ENCODE measurements at regions of chr13 and their contacts with region 1.

Region 1: GRCh38 chr13:44050450-44051063 is 170.9 kb downstream of the LACC1 start:
- DNase-seq: peak; percentile 52
- ATAC-seq: no peak; the same call in 1 of the 2 replicates
- H3K4me3 ChIP-seq: no peak overlapping the region
- H3K27ac ChIP-seq: no peak overlapping the region
- H3K4me1 ChIP-seq: peaks cover 13% of the 10 kb centered on the region
- H3K27me3 ChIP-seq: peaks cover 5% of the 10 kb centered on the region
- CTCF ChIP-seq: peak; percentile 75
- POLR2A ChIP-seq: no peak
- RAD21 ChIP-seq: peak; percentile 78

Region 2: GRCh38 chr13:44128552-44129001 is 78.0 kb after region 1 on chr13:
- CTCF ChIA-PET with region 1: no interaction called
- POLR2A ChIA-PET with region 1: no interaction called
- dilution Hi-C with region 1: no loop called
- in situ Hi-C with region 1: no loop called
- intact Hi-C with region 1: loop called (anchors 5 kb)
- DNase-seq: peak; percentile 65
- ATAC-seq: peak; percentile 57
- H3K4me3 ChIP-seq: no peak overlapping the region
- H3K27ac ChIP-seq: no peak overlapping the region
- H3K4me1 ChIP-seq: peaks cover 19% of the 10 kb centered on the region
- H3K27me3 ChIP-seq: no peaks in the 10 kb centered on the region
- CTCF ChIP-seq: no peak
- POLR2A ChIP-seq: no peak
- RAD21 ChIP-seq: no peak; the same call in 1 of the 2 replicates

Region 3: GRCh38 chr13:44237276-44237767 is 186.8 kb after region 1 on chr13:
- CTCF ChIA-PET with region 1: no interaction called
- POLR2A ChIA-PET with region 1: no interaction called
- dilution Hi-C with region 1: no loop called
- in situ Hi-C with region 1: no loop called
- intact Hi-C with region 1: loop called (anchors 10 kb)
- DNase-seq: peak; percentile 98
- ATAC-seq: peak; percentile 85
- H3K4me3 ChIP-seq: no peak overlapping the region
- H3K27ac ChIP-seq: peak overlapping the region; percentile 0; the same call in 1 of the 2 replicates
- H3K4me1 ChIP-seq: peaks cover 11% of the 10 kb centered on the region
- H3K27me3 ChIP-seq: no peaks in the 10 kb centered on the region
- CTCF ChIP-seq: no peak
- POLR2A ChIP-seq: 0 out of 2 replicates have a peak, but pooled peaks have one; percentile 22
- RAD21 ChIP-seq: peak; percentile 19; the same call in 1 of the 2 replicates